Activated CD4-positive, alpha-beta memory T cell treated with anti-CD3 and anti-CD28 coated beads for 36 hours (primary cell): ENCODE measurements at regions of chr20 and their contacts with region 1.

Region 1: GRCh38 chr20:50790651-50791277 is 4.1 kb upstream of the BCAS4 start:
- DNase-seq: peak; percentile 90
- H3K4me3 Mint-ChIP-seq: no peak overlapping the region
- H3K27ac Mint-ChIP-seq: peak overlapping the region; percentile 45
- H3K4me1 Mint-ChIP-seq: peaks cover 12% of the 10 kb centered on the region
- H3K27me3 Mint-ChIP-seq: no peaks in the 10 kb centered on the region

Region 2: DNA sequence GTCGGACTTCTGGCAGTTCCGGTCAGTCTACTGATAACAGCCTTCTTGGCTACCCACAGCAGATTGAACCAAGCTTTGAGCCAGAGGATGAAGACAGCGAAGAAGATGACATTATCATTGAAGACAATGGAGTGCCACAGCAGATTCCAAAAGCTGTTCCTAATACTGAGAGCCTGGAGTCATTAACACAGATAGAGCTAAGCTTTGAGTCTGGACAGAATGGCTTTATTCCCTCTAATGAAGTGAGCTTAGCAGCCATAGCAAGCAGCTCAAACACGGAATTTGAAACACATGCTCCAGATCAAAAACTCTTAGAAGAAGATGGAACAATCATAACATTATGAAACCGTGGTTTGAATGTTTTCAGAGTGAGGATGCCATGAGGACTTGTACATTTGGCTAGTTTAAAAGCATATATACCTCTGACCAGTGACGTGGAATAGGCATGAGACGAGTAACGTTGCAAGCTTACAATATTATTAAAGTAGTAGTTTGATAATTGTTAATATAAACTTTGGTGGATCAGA is 40.6 kb before region 1 on chr20:
- CTCF ChIA-PET with region 1: interaction called, 11 read pairs
- POLR2A ChIA-PET with region 1: no interaction called
- intact Hi-C with region 1: no loop called
- DNase-seq: no peak
- H3K4me3 Mint-ChIP-seq: no peak overlapping the region
- H3K27ac Mint-ChIP-seq: no peak overlapping the region
- H3K4me1 Mint-ChIP-seq: peaks cover 26% of the 10 kb centered on the region
- H3K27me3 Mint-ChIP-seq: no peaks in the 10 kb centered on the region

Region 3: DNA sequence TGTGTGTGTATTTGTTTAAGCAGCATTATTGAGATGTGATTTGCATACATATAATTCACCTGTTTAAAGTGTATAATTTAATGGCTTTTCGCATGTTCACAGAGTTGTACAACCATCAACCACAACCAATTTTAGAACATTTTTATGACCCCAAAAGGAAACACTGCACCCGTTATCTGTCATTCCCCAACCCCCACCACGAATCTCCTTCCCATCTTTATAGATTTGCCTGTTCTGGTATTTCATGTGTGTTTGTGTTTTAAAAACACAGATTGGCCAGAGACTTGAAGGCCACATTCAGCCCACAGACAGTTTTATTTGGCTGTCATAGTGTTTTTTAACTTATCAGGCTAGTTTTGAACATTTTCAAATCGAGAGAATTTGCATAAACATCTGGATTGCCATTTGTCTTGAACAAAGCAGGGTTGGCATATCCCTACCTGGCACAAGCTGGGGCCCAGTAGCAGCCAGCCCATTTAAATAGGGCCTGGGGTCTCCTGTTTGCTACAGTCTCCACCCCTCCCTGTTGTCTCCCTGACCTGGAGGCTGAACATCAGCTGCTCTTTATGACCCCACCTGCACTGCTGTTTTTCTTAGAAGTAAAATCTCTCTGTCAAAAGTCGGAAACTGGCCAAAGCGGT is 14.4 kb after region 1 on chr20:
- CTCF ChIA-PET with region 1: interaction called, 13 read pairs
- POLR2A ChIA-PET with region 1: interaction called, 3 read pairs
- intact Hi-C with region 1: no loop called
- DNase-seq: no peak
- H3K4me3 Mint-ChIP-seq: peak overlapping the region; percentile 27
- H3K27ac Mint-ChIP-seq: peak overlapping the region; percentile 83
- H3K4me1 Mint-ChIP-seq: peaks cover 18% of the 10 kb centered on the region
- H3K27me3 Mint-ChIP-seq: no peaks in the 10 kb centered on the region

Region 4: GRCh38 chr20:50903353-50904051 is 112.7 kb after region 1 on chr20:
- CTCF ChIA-PET with region 1: no interaction called
- POLR2A ChIA-PET with region 1: no interaction called
- intact Hi-C with region 1: no loop called
- DNase-seq: no peak
- H3K4me3 Mint-ChIP-seq: no peak overlapping the region
- H3K27ac Mint-ChIP-seq: peak overlapping the region; percentile 54
- H3K4me1 Mint-ChIP-seq: peaks cover 36% of the 10 kb centered on the region
- H3K27me3 Mint-ChIP-seq: no peaks in the 10 kb centered on the region

Region 5: GRCh38 chr20:50913690-50914375 is 123.1 kb after region 1 on chr20:
- CTCF ChIA-PET with region 1: interaction called, 12 read pairs
- POLR2A ChIA-PET with region 1: no interaction called
- intact Hi-C with region 1: no loop called
- DNase-seq: peak; percentile 55
- H3K4me3 Mint-ChIP-seq: no peak overlapping the region
- H3K27ac Mint-ChIP-seq: peak overlapping the region; percentile 64
- H3K4me1 Mint-ChIP-seq: peaks cover 83% of the 10 kb centered on the region
- H3K27me3 Mint-ChIP-seq: no peaks in the 10 kb centered on the region

Region 6: DNA sequence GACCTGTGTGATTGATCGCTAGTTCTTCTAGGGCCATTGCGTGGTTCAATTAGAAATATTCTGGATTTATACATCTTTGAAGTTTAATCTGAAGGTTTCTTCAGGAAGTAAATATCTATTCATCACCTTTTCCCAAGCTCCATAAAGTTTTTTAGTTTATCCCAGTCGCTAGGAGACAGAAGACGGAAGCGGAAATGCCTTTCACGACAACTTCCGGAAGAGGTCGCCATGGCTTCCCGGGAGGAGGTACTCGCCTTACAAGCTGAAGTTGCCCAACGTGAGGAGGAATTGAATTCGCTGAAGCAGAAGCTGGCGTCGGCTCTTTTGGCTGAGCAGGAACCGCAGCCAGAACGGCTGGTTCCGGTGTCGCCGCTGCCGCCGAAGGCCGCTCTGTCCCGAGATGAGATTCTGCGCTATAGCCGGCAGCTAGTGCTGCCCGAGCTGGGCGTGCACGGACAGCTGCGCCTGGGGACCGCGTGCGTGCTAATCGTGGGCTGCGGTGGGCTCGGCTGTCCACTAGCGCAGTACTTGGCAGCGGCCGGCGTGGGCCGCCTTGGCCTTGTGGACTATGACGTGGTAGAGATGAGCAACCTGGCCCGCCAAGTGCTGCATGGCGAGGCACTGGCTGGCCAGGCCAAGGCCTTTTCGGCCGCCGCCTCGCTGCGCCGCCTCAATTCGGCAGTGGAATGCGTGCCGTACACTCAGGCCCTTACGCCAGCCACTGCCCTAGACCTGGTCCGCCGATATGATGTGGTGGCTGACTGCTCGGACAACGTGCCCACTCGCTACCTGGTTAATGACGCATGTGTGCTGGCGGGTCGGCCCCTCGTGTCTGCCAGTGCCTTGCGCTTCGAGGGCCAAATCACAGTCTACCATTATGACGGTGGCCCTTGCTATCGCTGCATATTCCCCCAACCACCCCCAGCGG is 168.1 kb after region 1 on chr20 and contains the start of gene MOCS3:
- CTCF ChIA-PET with region 1: interaction called, 39 read pairs
- POLR2A ChIA-PET with region 1: interaction called, 19 read pairs
- intact Hi-C with region 1: no loop called
- DNase-seq: peak; percentile 87
- H3K4me3 Mint-ChIP-seq: peak within 1 kb of the TSS; percentile 91
- H3K27ac Mint-ChIP-seq: peak within 1 kb of the TSS; percentile 98
- H3K4me1 Mint-ChIP-seq: peaks cover 50% of the 10 kb centered on the region
- H3K27me3 Mint-ChIP-seq: no peaks in the 10 kb centered on the region
- total RNA-seq, gene MOCS3: 3.6 to 3.8 TPM

Region 7: GRCh38 chr20:50987592-50988210 is 196.9 kb after region 1 on chr20:
- CTCF ChIA-PET with region 1: interaction called, 28 read pairs
- POLR2A ChIA-PET with region 1: no interaction called
- intact Hi-C with region 1: no loop called
- DNase-seq: peak; percentile 59
- H3K4me3 Mint-ChIP-seq: no peak overlapping the region
- H3K27ac Mint-ChIP-seq: no peak overlapping the region
- H3K4me1 Mint-ChIP-seq: no peaks in the 10 kb centered on the region
- H3K27me3 Mint-ChIP-seq: peaks cover 22% of the 10 kb centered on the region

Region 8: GRCh38 chr20:51326201-51326819 is 535.5 kb after region 1 on chr20:
- CTCF ChIA-PET with region 1: interaction called, 10 read pairs
- POLR2A ChIA-PET with region 1: no interaction called
- intact Hi-C with region 1: no loop called
- DNase-seq: peak; percentile 51
- H3K4me3 Mint-ChIP-seq: no peak overlapping the region
- H3K27ac Mint-ChIP-seq: no peak overlapping the region
- H3K4me1 Mint-ChIP-seq: no peaks in the 10 kb centered on the region
- H3K27me3 Mint-ChIP-seq: peaks cover 2% of the 10 kb centered on the region